Esophagus muscularis mucosa (tissue), 4 donors: ENCODE measurements at regions of chr12 and their contacts with region 1.

Region 1: DNA sequence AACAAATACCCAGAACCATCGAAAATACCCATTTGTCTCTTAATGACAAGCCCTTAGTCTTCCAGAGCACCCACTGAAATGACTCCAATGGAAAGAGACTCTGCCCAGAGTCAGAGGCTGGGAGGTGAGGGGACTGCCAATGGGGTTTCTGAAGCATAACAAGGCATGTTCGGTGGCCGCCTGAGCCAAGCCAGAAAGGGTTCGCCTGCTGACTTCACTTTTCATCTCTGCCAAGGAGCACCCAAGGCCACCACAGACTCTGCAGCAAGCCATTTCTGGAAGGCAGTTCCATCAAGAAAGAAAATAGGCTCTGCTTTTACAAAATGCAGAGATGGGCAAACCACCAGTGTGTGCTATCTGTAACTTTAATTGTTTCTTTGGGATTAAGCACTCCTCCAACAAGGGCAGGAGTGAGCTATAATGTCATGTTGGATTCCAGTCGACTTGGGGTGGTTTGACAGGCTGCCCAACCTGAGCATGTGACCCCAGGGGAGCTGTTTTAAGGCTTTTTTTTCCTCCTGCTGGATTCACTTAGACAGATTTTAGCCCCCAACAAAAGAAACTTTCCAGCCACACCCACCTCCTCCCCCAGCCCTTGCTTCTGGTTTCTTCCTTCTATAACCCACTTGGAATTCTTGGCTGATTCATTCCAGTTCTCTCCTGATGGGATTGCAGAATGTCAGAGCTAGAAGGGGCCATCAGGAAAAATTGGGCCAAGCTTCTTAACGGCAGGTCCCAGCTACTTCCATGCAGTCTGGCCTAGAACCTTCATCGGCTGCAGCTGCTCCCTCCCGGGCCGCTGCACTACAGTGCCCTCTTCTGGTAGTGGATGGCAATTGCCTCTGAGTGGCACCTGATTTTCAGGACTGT is 24.1 kb downstream of the CKAP4 start:
- DNase-seq: no peak
- H3K4me3 ChIP-seq: no peak overlapping the region
- H3K27ac ChIP-seq: no peak overlapping the region
- H3K4me1 ChIP-seq: peaks cover 3 to 17% (median 8%) of the 10 kb centered on the region in 4 donors
- H3K27me3 ChIP-seq: no peaks in the 10 kb centered on the region
- CTCF ChIP-seq: peak; percentile 89 to 99 (median 92)
- EP300 ChIP-seq: no peak
- POLR2A ChIP-seq: no peak

Region 2: DNA sequence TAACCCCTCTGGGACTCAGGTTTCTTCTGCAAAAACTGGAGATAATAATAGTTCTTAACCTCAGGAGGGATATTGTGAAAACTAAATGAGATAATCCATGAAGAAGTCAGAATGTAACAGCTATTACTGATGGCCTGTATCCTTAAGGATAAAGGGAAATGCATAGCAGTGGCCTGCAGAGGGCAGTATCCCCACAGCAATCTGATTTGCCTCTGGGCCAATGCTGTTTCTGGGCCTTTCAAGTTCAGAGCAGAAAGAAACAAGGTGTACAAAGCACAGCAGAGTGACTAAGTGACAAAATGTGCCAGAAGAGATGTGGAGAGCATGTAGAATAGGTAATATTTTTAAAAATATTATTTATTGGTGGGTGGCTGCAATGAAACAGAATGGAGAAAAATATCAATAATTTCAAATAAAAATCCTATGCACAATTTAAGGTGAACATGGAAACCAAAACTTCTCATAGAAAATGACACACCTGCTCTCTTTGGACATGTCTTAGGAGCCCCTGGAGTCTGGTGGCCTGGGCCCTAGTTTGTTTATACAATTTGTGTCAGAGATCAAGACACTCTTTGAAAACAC is 803.0 kb before region 1 on chr12:
- intact Hi-C with region 1: loop called (anchors 5 kb)
- DNase-seq: no peak
- H3K4me3 ChIP-seq: no peak overlapping the region
- H3K27ac ChIP-seq: no peak overlapping the region
- H3K4me1 ChIP-seq: no peaks in the 10 kb centered on the region
- H3K27me3 ChIP-seq: peaks cover 0 to 3% (median 0%) of the 10 kb centered on the region in 4 donors
- CTCF ChIP-seq: peak; percentile 87 to 92 (median 91)
- EP300 ChIP-seq: no peak
- POLR2A ChIP-seq: no peak

Region 3: DNA sequence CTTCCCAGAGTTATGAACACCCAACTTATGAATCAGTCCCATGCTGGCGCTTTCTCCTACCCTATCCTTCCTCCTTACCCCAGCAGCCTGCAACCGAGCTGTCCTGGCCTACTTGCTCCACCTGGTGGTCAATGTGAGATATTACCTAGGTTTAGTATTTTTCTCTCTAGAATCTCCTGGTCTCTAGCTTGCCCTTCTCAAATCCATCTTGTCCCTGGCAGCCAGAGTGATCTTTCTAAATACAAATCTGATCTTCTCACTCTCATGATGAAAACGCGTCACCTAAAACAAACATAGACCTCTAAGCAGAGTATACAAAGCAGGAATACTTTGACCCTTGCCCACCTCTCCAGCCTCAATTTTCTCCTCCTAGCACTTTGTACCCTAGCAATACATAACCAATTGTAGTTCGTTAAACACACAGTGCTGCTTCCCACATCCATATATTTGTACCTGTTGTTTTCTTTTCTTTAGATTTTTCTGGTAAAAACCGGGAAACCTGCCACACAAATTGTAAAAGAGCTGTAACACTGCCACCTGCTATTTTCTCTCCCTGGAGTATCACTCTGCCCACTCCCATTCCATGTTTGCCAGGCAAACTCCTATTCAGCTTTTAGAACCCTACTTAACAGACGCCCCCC is 58.9 kb after region 1 on chr12:
- intact Hi-C with region 1: loop called (anchors 2 kb)
- DNase-seq: peak; percentile 4
- H3K4me3 ChIP-seq: no peak overlapping the region
- H3K27ac ChIP-seq: no peak overlapping the region
- H3K4me1 ChIP-seq: peaks cover 0 to 5% (median 0%) of the 10 kb centered on the region in 4 donors
- H3K27me3 ChIP-seq: no peaks in the 10 kb centered on the region
- CTCF ChIP-seq: peak; percentile 58 to 70 (median 68)
- EP300 ChIP-seq: no peak
- POLR2A ChIP-seq: no peak

Region 4: GRCh38 chr12:106302401-106303201 is 78.9 kb after region 1 on chr12 and contains the start of gene TCP11L2:
- intact Hi-C with region 1: no loop called
- DNase-seq: peak; percentile 97
- H3K4me3 ChIP-seq: peak within 1 kb of the TSS; percentile 83 to 97 (median 94)
- H3K27ac ChIP-seq: peak within 1 kb of the TSS; percentile 87 to 97 (median 97)
- H3K4me1 ChIP-seq: peaks cover 47 to 67% (median 59%) of the 10 kb centered on the region in 4 donors
- H3K27me3 ChIP-seq: no peaks in the 10 kb centered on the region
- CTCF ChIP-seq: no peak
- EP300 ChIP-seq: no peak
- POLR2A ChIP-seq: peak; percentile 55
- total RNA-seq, gene TCP11L2: 32.1 to 52.3 (median 39.5) TPM

Region 5: GRCh38 chr12:106342397-106343213 is 118.9 kb after region 1 on chr12:
- intact Hi-C with region 1: loop called (anchors 5 kb)
- DNase-seq: no peak
- H3K4me3 ChIP-seq: peak overlapping the region; percentile 15 to 31 (median 22)
- H3K27ac ChIP-seq: peak overlapping the region; percentile 61 to 76 (median 70)
- H3K4me1 ChIP-seq: peaks cover 28 to 42% (median 39%) of the 10 kb centered on the region in 4 donors
- H3K27me3 ChIP-seq: no peaks in the 10 kb centered on the region
- CTCF ChIP-seq: no peak
- EP300 ChIP-seq: no peak
- POLR2A ChIP-seq: no peak

Region 6: DNA sequence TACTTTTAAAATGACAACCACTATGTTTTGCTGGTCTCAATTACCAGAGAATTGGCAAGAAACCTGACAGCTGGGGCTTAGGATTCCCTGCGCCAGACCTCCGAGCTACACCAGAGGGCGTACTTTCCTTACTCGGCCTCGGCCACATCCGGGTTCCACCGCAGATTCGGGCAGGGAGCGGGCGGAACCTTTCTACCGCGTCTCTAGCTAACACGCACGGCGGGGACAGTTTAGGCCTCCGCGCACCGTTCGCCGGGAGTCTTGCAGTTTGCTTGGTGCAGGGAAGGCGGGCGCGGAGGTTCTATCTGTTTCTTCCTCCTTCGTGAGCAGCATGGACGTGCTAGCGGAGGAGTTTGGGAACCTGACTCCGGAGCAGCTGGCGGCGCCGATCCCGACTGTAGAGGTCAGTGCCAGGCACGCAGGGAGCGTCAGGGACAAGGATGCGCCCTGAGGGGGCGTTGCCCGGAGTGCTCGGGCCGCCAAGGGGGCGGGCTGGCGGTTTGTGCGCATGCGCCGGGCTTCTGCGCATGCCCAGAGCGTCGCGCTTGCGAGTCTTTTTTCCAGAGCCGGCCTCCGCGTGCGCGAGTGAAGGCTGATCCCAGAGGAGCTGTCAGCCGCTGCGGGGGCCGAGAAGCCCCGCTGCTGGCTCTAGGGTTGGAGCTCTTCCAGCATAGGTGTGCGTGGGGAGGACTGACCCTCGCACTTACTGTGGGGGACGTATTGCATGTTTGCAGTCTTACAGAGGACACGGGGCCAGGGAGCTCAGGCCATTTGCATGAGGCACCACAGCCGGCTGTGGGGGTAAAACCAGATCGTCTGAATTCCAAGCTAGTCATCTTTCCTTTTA is 134.1 kb after region 1 on chr12 and contains the start of gene POLR3B:
- intact Hi-C with region 1: loop called (anchors 5 kb)
- DNase-seq: peak; percentile 99
- H3K4me3 ChIP-seq: peak within 1 kb of the TSS; percentile 72 to 88 (median 78)
- H3K27ac ChIP-seq: peak within 1 kb of the TSS; percentile 89 to 96 (median 93)
- H3K4me1 ChIP-seq: peaks cover 13 to 30% (median 23%) of the 10 kb centered on the region in 4 donors
- H3K27me3 ChIP-seq: no peaks in the 10 kb centered on the region
- CTCF ChIP-seq: peak; percentile 88 to 94 (median 91)
- EP300 ChIP-seq: no peak
- POLR2A ChIP-seq: peak; percentile 73
- total RNA-seq, gene POLR3B: 4.2 to 6.1 (median 5.3) TPM